CD4-positive, alpha-beta memory T cell (primary cell): ENCODE measurements at regions of chr17 and their contacts with region 1.

Region 1: DNA sequence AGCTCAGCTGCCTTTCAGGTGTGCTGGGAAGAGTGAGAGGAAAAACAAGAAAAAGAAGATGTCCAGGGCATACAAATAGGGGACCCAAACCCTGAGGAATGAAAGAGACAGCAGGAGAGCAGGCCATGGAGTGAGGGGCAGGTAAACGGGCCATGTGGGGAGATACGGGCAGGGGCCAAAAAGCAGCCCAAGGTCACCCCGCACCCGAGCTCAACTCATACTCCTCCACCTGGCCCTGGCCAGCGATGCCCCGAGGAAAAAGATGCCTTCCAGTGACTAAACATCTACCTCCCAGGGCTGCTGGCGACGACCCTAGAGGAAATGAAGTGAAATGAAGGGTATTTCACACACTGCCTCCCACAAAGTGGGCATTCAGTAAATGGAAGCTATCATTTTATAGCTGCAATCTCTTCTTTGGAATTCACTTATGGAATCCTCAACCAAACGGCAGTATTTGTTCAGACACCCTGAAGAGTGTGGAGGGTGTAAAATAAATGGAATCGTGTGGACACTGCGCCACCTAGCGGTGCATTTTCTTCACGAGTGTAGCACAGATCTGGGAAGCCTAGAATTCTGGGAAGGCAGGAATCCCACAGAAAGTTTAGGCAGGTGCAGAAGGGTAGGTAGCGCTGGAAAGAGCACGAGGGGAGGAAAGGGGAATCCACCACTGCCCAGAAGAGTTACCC is 14.9 kb downstream of the ELAC2 start:
- DNase-seq: peak in 4 of 5 donors; percentile 14 to 26 (median 18)
- H3K4me3 ChIP-seq: no peak overlapping the region
- H3K4me3 Mint-ChIP-seq: no peak overlapping the region
- H3K27ac ChIP-seq: no peak overlapping the region
- H3K27ac Mint-ChIP-seq: no peak overlapping the region
- H3K4me1 ChIP-seq: no peaks in the 10 kb centered on the region
- H3K4me1 Mint-ChIP-seq: peaks cover 0 to 4% (median 2%) of the 10 kb centered on the region in 4 donors
- H3K27me3 ChIP-seq: no peaks in the 10 kb centered on the region
- H3K27me3 Mint-ChIP-seq: no peaks in the 10 kb centered on the region

Region 2: GRCh38 chr17:12983991-12984884 is 18.7 kb before region 1 on chr17:
- CTCF ChIA-PET with region 1: interaction called, 16 read pairs
- POLR2A ChIA-PET with region 1: no interaction called
- intact Hi-C with region 1: no loop called
- DNase-seq: no peak
- H3K4me3 ChIP-seq: no peak overlapping the region
- H3K4me3 Mint-ChIP-seq: no peak overlapping the region
- H3K27ac ChIP-seq: no peak overlapping the region
- H3K27ac Mint-ChIP-seq: no peak overlapping the region
- H3K4me1 ChIP-seq: no peaks in the 10 kb centered on the region
- H3K4me1 Mint-ChIP-seq: no peaks in the 10 kb centered on the region
- H3K27me3 ChIP-seq: no peaks in the 10 kb centered on the region
- H3K27me3 Mint-ChIP-seq: peaks cover 0 to 8% of the 10 kb centered on the region in 2 donors

Region 3: GRCh38 chr17:12992676-12993075 is 10.2 kb before region 1 on chr17:
- CTCF ChIA-PET with region 1: interaction called, 12 read pairs
- POLR2A ChIA-PET with region 1: no interaction called
- intact Hi-C with region 1: no loop called
- DNase-seq: no peak
- H3K4me3 ChIP-seq: no peak overlapping the region
- H3K4me3 Mint-ChIP-seq: no peak overlapping the region
- H3K27ac ChIP-seq: no peak overlapping the region
- H3K27ac Mint-ChIP-seq: peak overlapping the region in 1 of 7 donors; percentile 15
- H3K4me1 ChIP-seq: no peaks in the 10 kb centered on the region
- H3K4me1 Mint-ChIP-seq: peaks cover 0 to 5% (median 2%) of the 10 kb centered on the region in 4 donors
- H3K27me3 ChIP-seq: no peaks in the 10 kb centered on the region
- H3K27me3 Mint-ChIP-seq: no peaks in the 10 kb centered on the region

Region 4: DNA sequence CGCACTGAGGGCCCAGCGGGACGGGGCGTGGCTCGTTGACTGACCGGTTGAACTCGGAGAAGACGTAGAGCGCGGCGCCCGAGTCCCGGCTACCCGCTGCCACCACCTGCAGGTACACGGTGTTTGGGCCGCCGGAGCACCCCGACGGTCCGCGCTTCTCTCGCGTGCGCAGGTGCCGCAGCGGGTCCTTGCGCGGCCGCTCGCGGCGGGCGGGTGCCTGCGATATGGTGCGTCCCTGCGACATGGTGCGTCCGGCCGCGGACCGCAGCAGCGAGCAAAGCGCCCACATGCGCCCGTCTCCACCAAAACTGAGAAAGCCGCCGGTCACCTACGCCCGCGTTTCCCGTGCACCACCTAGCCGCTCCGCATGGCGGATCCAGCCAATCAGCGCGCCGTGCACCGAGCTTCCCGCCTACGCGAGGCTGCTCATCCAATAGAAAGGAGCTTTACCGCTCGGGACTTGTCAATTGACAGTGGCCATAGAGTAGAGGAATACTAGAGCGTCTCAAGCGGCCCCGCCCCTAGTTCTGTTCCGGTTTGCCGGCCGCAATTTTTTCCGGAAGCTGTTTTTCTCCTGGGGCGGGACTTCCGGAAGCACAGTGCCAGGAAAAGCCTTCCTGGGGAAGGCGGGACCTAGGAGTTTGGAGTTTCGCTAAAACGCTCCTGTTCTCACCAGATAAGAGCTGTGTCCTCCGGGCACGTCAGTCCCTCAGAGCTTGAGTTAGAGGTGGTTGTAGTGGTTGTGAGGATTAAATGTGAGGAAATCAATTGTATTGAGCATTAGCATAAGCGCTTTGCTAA is 14.9 kb after region 1 on chr17 and contains the start of gene ELAC2:
- CTCF ChIA-PET with region 1: interaction called, 312 read pairs
- POLR2A ChIA-PET with region 1: interaction called, 6 read pairs
- intact Hi-C with region 1: no loop called
- DNase-seq: peak; percentile 96 to 98 (median 96)
- H3K4me3 ChIP-seq: peak within 1 kb of the TSS; percentile 77 to 94
- H3K4me3 Mint-ChIP-seq: peak within 1 kb of the TSS; percentile 95 to 100 (median 98)
- H3K27ac ChIP-seq: peak within 1 kb of the TSS; percentile 73
- H3K27ac Mint-ChIP-seq: peak within 1 kb of the TSS; percentile 94 to 98 (median 97)
- H3K4me1 ChIP-seq: peaks cover 18% of the 10 kb centered on the region
- H3K4me1 Mint-ChIP-seq: peaks cover 15 to 44% (median 32%) of the 10 kb centered on the region in 4 donors
- H3K27me3 ChIP-seq: no peaks in the 10 kb centered on the region
- H3K27me3 Mint-ChIP-seq: no peaks in the 10 kb centered on the region
- total RNA-seq, gene ELAC2: 65.8 to 73.2 TPM

Region 5: GRCh38 chr17:13067629-13068303 is 64.9 kb after region 1 on chr17:
- CTCF ChIA-PET with region 1: no interaction called
- POLR2A ChIA-PET with region 1: no interaction called
- intact Hi-C with region 1: no loop called
- DNase-seq: no peak
- H3K4me3 ChIP-seq: no peak overlapping the region
- H3K4me3 Mint-ChIP-seq: no peak overlapping the region
- H3K27ac ChIP-seq: no peak overlapping the region
- H3K27ac Mint-ChIP-seq: no peak overlapping the region
- H3K4me1 ChIP-seq: no peaks in the 10 kb centered on the region
- H3K4me1 Mint-ChIP-seq: no peaks in the 10 kb centered on the region
- H3K27me3 ChIP-seq: no peaks in the 10 kb centered on the region
- H3K27me3 Mint-ChIP-seq: peaks cover 6 to 11% of the 10 kb centered on the region in 2 donors